Common myeloid progenitor, CD34-positive (primary cell): ENCODE measurements at regions of chr12 and their contacts with region 1.

Region 1: GRCh38 chr12:80195074-80195726 is 95.9 kb downstream of the OTOGL start:
- DNase-seq: peak; percentile 49 to 75 (median 74)
- H3K4me3 ChIP-seq: no peak overlapping the region
- H3K27ac ChIP-seq: no peak overlapping the region
- H3K4me1 ChIP-seq: no peaks in the 10 kb centered on the region
- H3K27me3 ChIP-seq: no peaks in the 10 kb centered on the region

Region 2: DNA sequence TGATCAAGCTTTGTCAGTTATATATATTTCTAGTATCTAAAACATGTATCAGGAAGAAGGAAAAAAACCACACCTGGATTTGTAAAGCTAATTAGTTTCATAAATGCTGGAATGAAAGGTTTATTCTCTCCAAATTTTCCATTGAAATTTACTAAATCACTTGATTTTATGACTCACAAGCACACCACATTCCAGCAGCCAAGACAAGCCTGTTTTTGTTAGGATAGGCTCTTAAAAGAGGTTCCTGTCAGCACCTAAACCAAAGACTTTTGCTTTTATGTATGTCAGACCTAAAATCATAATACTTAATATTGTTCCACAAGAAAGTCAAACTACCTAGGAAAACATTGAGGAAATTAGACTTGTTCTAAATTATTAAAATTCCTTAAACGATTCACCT is 419.1 kb before region 1 on chr12:
- CTCF ChIA-PET with region 1: no interaction called
- POLR2A ChIA-PET with region 1: no interaction called
- DNase-seq: no peak
- H3K4me3 ChIP-seq: no peak overlapping the region
- H3K27ac ChIP-seq: no peak overlapping the region
- H3K4me1 ChIP-seq: no peaks in the 10 kb centered on the region
- H3K27me3 ChIP-seq: no peaks in the 10 kb centered on the region

Region 3: GRCh38 chr12:80162177-80162576 is 33.0 kb before region 1 on chr12:
- CTCF ChIA-PET with region 1: no interaction called
- POLR2A ChIA-PET with region 1: no interaction called
- DNase-seq: peak in 1 of 3 donors; percentile 2
- H3K4me3 ChIP-seq: no peak overlapping the region
- H3K27ac ChIP-seq: no peak overlapping the region
- H3K4me1 ChIP-seq: no peaks in the 10 kb centered on the region
- H3K27me3 ChIP-seq: no peaks in the 10 kb centered on the region

Region 4: GRCh38 chr12:80205960-80206359 is 10.8 kb after region 1 on chr12:
- CTCF ChIA-PET with region 1: interaction called, 16 read pairs
- POLR2A ChIA-PET with region 1: no interaction called
- DNase-seq: peak in 2 of 3 donors; percentile 22 to 43
- H3K4me3 ChIP-seq: no peak overlapping the region
- H3K27ac ChIP-seq: no peak overlapping the region
- H3K4me1 ChIP-seq: peaks cover 0 to 10% (median 6%) of the 10 kb centered on the region in 4 experiments
- H3K27me3 ChIP-seq: no peaks in the 10 kb centered on the region

Region 5: DNA sequence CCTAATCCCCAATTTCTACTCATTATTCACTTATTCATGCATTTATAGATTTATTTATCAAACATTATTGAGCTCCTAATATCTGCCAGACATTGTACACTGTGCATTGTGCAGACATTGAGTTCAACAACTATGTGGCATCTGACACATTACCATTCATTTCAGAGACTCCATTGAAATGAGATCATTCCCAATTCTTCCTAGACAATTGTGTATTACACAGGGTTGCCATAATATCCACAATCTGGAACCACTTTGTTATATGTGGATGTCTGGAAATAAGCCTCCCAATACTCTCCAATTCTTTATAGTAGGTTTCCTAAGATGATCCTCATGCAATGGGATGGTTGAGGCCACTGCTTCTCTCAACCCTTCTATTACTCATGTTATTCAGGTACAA is 69.2 kb after region 1 on chr12:
- CTCF ChIA-PET with region 1: interaction called, 204 read pairs
- POLR2A ChIA-PET with region 1: no interaction called
- DNase-seq: no peak
- H3K4me3 ChIP-seq: no peak overlapping the region
- H3K27ac ChIP-seq: no peak overlapping the region
- H3K4me1 ChIP-seq: no peaks in the 10 kb centered on the region
- H3K27me3 ChIP-seq: no peaks in the 10 kb centered on the region